Activated naive CD4-positive, alpha-beta T cell treated with anti-CD3 and anti-CD28 coated beads for 36 hours (primary cell): ENCODE measurements at regions of chr5 and their contacts with region 1.

Region 1: GRCh38 chr5:112174959-112175594 is 244.0 kb downstream of the EPB41L4A start:
- DNase-seq: peak; percentile 40
- H3K4me3 Mint-ChIP-seq: no peak overlapping the region
- H3K27ac Mint-ChIP-seq: no peak overlapping the region
- H3K4me1 Mint-ChIP-seq: peaks cover 2% of the 10 kb centered on the region
- H3K27me3 Mint-ChIP-seq: no peaks in the 10 kb centered on the region

Region 2: DNA sequence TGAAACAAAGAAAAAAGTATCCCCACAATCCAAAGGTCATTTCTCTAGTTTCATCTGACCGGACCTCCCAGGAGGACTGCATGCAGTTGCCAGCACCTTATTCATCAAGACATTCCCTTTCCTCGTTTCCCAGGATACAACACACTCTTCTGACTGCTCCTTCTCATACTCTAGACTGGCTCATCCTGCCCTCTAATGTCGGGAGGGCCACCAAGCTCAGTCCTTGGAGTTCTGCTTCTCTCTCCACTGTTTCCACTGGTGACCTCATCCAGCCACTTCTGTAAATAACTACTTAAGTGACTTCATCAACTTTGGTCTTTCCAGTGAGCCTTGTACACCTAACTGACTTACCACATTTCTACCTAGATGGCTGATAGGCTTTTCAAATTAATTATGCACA is 64.9 kb after region 1 on chr5:
- CTCF ChIA-PET with region 1: no interaction called
- intact Hi-C with region 1: no loop called
- DNase-seq: no peak
- H3K4me3 Mint-ChIP-seq: no peak overlapping the region
- H3K27ac Mint-ChIP-seq: no peak overlapping the region
- H3K4me1 Mint-ChIP-seq: no peaks in the 10 kb centered on the region
- H3K27me3 Mint-ChIP-seq: peaks cover 9% of the 10 kb centered on the region

Region 3: DNA sequence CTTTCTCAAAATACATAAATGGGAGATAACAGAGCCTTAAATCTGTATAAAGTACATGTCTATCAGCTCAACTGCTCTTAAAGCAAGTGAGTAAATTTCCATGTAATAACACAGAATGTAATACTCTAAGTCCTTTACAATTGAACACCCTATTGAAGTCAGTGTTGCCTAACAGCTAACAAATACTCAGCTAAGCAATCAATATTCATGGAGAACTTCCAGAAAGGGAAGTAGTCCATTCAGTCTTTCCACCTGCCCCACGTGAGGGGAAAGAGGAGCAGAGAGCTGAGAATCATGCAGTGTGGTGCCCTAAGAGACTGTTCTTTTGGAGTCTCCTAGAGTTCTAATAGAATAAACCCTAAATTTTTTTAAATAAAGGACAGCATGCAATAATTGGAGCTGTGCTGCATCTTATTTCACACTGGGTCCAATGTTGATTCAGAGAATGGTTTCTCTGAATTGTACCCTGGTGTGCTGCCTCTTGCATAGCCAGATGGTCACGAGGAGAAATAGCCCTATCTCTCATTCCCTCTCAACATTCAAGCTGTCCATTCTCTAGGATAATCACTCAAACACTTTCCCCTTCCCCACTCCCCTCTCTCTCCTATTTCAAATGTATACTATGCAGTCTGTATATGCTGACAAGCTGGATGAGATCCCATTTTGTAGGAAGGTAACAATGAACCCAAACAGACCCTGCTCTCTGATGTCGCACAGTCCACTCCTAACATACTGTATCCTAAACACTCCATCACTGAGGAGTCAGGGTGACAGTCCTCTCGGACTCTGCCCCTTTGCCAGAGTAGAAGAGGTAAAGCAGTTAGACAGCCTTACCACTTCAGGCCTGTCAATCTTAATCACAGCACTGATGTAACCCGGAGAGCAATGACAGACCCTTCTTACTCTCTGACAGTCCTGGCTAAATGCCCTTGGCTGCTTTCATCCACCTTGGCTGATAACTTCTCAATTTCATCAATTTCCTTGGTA is 109.2 kb after region 1 on chr5:
- CTCF ChIA-PET with region 1: no interaction called
- intact Hi-C with region 1: no loop called
- DNase-seq: no peak
- H3K4me3 Mint-ChIP-seq: no peak overlapping the region
- H3K27ac Mint-ChIP-seq: no peak overlapping the region
- H3K4me1 Mint-ChIP-seq: no peaks in the 10 kb centered on the region
- H3K27me3 Mint-ChIP-seq: no peaks in the 10 kb centered on the region

Region 4: DNA sequence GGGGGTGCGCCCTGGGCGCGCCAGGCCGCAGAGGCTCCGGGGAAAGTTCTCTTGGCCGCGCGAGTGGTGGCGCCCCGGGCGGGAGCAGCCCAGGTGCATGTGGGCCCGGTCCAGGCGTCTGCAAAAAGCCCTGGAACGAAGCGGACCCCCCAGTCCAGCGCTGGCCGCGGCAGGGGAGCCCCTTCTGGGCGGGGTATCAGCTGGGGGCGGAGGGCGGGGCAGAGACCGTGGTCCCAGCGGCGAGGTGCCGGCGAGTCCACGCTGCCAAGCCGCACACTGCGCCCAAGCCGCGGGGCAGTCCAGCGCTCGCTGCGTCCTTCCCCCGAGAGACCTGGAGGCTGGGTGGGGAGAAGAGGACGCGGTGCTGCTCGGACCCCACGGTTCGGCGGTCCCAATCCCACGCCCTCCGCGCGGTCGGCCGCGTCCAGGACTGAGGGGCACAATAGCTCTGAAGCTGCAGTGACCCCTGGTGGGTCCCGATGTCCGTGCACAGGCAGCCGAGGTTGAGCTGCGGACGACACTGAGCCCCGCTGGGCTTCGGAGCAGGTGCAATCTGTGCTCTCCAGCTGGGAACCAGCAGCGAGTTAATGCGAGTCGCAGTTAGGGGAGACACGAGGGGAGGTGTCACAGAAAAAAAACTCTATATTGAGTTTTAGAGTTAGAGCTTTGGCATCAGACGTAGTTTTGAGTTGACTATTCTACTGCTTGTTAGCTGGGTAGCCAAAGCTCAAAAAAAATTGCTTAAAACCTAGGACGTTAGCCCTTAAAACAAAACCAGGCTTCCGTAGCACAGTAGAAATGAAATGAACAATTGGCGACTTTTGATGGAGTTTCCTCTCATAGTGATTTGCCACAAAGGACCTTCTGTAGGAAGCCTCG is 245.1 kb after region 1 on chr5:
- CTCF ChIA-PET with region 1: interaction called, 30 read pairs
- intact Hi-C with region 1: loop called (anchors 1 kb)
- DNase-seq: peak; percentile 60
- H3K4me3 Mint-ChIP-seq: peak overlapping the region; percentile 56
- H3K27ac Mint-ChIP-seq: no peak overlapping the region
- H3K4me1 Mint-ChIP-seq: peaks cover 10% of the 10 kb centered on the region
- H3K27me3 Mint-ChIP-seq: peaks cover 45% of the 10 kb centered on the region

Region 5: GRCh38 chr5:112492291-112492690 is 317.2 kb after region 1 on chr5:
- CTCF ChIA-PET with region 1: interaction called, 4 read pairs
- intact Hi-C with region 1: loop called (anchors 1 kb)
- DNase-seq: peak; percentile 55
- H3K4me3 Mint-ChIP-seq: no peak overlapping the region
- H3K27ac Mint-ChIP-seq: no peak overlapping the region
- H3K4me1 Mint-ChIP-seq: no peaks in the 10 kb centered on the region
- H3K27me3 Mint-ChIP-seq: peaks cover 21% of the 10 kb centered on the region

Region 6: DNA sequence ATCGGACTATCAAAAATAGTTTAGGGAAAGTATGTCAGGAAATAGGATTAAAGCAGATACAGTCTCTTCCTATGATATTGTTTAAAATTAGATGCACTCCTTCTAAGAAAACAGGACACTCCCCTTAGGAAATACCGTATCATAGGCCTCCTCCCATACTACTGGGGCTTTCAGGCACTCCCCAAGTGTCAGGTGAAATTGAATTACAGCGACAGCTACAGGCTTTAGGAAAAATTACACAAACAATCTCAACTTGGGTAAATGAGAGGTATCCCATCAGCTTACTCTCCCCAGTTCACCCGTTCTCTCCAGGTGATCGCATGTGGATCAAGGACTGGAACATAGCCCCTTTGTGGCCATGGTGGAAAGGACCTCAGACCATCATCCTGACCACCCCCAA is 354.4 kb after region 1 on chr5:
- CTCF ChIA-PET with region 1: interaction called, 3 read pairs
- intact Hi-C with region 1: loop called (anchors 1 kb)
- DNase-seq: no peak
- H3K4me3 Mint-ChIP-seq: no peak overlapping the region
- H3K27ac Mint-ChIP-seq: no peak overlapping the region
- H3K4me1 Mint-ChIP-seq: no peaks in the 10 kb centered on the region
- H3K27me3 Mint-ChIP-seq: peaks cover 8% of the 10 kb centered on the region